ENCODE measurements at regions of chr14 and their contacts with region 1.

Region 1: DNA sequence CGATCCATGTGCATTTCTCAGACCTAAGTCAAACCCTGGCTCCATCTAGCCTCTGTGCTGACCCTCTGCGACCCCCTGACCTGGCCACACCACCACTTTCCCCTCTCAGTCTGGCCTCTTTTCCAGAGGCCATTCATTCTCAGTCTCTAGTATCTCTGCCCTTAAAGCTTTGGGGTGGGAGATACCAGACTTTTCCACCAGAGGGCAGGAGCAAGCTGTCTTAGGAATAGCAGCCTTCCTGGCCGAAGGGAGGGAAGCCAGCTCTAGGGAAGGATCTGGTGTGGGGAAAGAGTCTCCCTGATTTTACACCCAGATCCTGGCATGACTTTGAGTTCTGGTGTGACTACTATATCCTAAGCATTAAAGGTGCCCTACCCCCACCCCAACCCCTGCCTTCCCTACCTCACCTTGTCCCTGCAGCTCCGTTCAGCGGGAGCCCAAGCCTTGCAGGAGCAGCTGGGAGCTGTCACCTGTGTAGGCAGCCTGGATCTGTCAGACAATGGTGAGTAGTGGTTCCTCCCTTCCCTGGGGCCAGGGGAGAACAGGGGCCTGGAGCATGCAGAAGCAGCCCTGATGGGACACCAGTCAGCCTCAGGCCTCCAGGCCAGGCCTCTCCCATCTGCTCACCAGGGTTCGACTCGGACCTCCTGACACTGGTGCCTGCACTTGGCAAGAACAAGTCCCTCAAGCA is 6.6 kb downstream of the CARMIL3 start:
- DNase-seq: peak in 5 of 10 donors; percentile 62 to 90 (median 79)
- H3K4me3 ChIP-seq: peak overlapping the region in 1 of 59 donors; percentile 4
- H3K27ac ChIP-seq: peak overlapping the region in 3 of 59 donors; percentile 1 to 46 (median 21)
- H3K27me3 ChIP-seq: no peaks in the 10 kb centered on the region
- CTCF ChIP-seq: peak in 55 of 56 donors; percentile 41 to 96 (median 79)

Region 2: DNA sequence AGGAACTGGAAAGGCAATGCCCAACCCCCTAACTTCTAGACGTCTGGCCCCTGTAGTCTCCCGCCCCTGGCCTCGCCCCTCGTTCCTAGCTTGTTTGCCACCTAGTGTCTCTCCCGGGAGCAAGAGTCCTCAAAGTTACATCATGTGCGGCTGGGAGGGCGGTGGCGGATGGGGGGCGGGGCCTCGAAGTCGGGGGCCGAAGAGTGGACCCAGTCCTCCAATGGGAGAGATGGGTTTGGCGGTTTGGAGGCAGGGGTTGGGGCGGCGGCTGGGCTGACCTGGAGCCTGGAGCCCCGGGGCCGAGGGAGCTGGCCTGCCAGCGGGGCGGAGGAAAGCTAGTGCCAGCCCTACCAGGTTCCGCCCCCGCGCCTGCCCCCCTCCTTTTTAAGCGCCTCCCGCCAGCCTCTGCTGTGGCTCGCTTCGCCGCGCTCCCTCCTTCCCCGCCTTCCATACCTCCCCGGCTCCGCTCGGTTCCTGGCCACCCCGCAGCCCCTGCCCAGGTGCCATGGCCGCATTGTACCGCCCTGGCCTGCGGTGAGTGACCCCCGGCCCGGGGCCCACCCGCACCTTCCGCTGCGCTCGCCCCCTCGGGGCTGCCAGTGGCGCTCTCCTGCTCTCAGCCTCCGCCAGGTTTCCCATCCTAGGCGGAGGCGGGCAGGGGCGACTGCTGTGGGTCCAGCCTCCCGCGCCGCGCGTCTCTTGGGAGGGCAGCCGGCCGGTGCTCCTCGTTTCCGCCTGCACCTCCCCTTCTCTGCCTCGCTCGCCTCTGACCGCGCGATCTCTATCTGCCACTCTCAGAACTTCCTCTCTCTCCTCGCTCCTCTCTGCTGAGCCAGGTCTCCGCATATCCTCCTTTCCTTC is 35.7 kb after region 1 on chr14 and contains the start of gene PCK2:
- intact Hi-C with region 1: loop called (anchors 2 to 5 kb)
- DNase-seq: peak; percentile 54 to 88 (median 76)
- H3K4me3 ChIP-seq: peak within 1 kb of the TSS; percentile 60 to 98 (median 82)
- H3K27ac ChIP-seq: peak within 1 kb of the TSS in 58 of 59 donors; percentile 31 to 96 (median 85)
- H3K27me3 ChIP-seq: no peaks in the 10 kb centered on the region
- CTCF ChIP-seq: peak in 17 of 56 donors; percentile 4 to 36 (median 18)
- total RNA-seq, gene PCK2: 2.6 to 11.6 (median 6.5) TPM

Region 3: GRCh38 chr14:24114536-24115450 is 56.4 kb after region 1 on chr14 and contains the starts of genes DCAF11 and NRL:
- intact Hi-C with region 1: loop called in 1 of 2 experiments (anchors 1 kb)
- DNase-seq: peak; percentile 95 to 99 (median 98)
- H3K4me3 ChIP-seq: peak within 1 kb of the TSS; percentile 53 to 100 (median 85)
- H3K27ac ChIP-seq: peak within 1 kb of the TSS; percentile 93 to 100 (median 99)
- H3K27me3 ChIP-seq: no peaks in the 10 kb centered on the region
- CTCF ChIP-seq: peak in 15 of 56 donors; percentile 1 to 65 (median 17)
- total RNA-seq, gene DCAF11: 58.6 to 104 (median 77.7) TPM
- total RNA-seq, gene NRL: 1.7 to 6.4 (median 3.6) TPM

Region 4: GRCh38 chr14:24160850-24161804 is 102.7 kb after region 1 on chr14 and contains the start of gene IRF9:
- intact Hi-C with region 1: loop called in 1 of 2 experiments (anchors 10 kb)
- DNase-seq: peak; percentile 92 to 98 (median 96)
- H3K4me3 ChIP-seq: peak within 1 kb of the TSS; percentile 51 to 96 (median 79)
- H3K27ac ChIP-seq: peak within 1 kb of the TSS; percentile 66 to 99 (median 95)
- H3K27me3 ChIP-seq: no peaks in the 10 kb centered on the region
- CTCF ChIP-seq: peak; percentile 86 to 99 (median 96)
- total RNA-seq, gene IRF9: 38.3 to 321 (median 79.1) TPM

Region 5: GRCh38 chr14:24299255-24300195 is 241.1 kb after region 1 on chr14 and contains the starts of genes DHRS1 and NOP9:
- intact Hi-C with region 1: loop called in 1 of 2 experiments (anchors 5 kb)
- DNase-seq: peak; percentile 87 to 95 (median 92)
- H3K4me3 ChIP-seq: peak within 1 kb of the TSS; percentile 68 to 100 (median 96)
- H3K27ac ChIP-seq: peak within 1 kb of the TSS in 52 of 59 donors; percentile 13 to 91 (median 76)
- H3K27me3 ChIP-seq: no peaks in the 10 kb centered on the region
- CTCF ChIP-seq: peak in 34 of 56 donors; percentile 8 to 62 (median 30)
- total RNA-seq, gene DHRS1: 14.1 to 34.4 (median 22.4) TPM
- total RNA-seq, gene NOP9: 21.2 to 33.3 (median 26.9) TPM